HepG2 (cell line): ENCODE measurements at regions of chr4 and their contacts with region 1.

Region 1: GRCh38 chr4:140861359-140862176 is 105.4 kb upstream of the TBC1D9 start:
- DNase-seq: peak; percentile 60
- ATAC-seq: peak; percentile 73
- H3K4me3 ChIP-seq: no peak overlapping the region
- H3K27ac ChIP-seq: no peak overlapping the region
- H3K4me1 ChIP-seq: no peaks in the 10 kb centered on the region
- H3K27me3 ChIP-seq: 0 out of 5 replicates have a peak, but pooled peaks cover 0 to 20% of the 10 kb centered on the region in 2 experiments
- CTCF ChIP-seq: peak; percentile 83
- EP300 ChIP-seq: no peak
- POLR2A ChIP-seq: no peak
- RAD21 ChIP-seq: peak; percentile 32; the same call in 1 of the 2 replicates

Region 2: GRCh38 chr4:140884431-140885058 is 23.0 kb after region 1 on chr4:
- CTCF ChIA-PET with region 1: interaction called, 35 read pairs
- POLR2A ChIA-PET with region 1: no interaction called
- in situ Hi-C with region 1: no loop called
- intact Hi-C with region 1: loop called (anchors 1 kb)
- DNase-seq: peak; percentile 63
- ATAC-seq: peak; percentile 95
- H3K4me3 ChIP-seq: no peak overlapping the region
- H3K27ac ChIP-seq: no peak overlapping the region
- H3K4me1 ChIP-seq: peaks cover 7% of the 10 kb centered on the region
- H3K27me3 ChIP-seq: no peaks in the 10 kb centered on the region
- CTCF ChIP-seq: peak; percentile 82
- EP300 ChIP-seq: no peak
- POLR2A ChIP-seq: no peak
- RAD21 ChIP-seq: peak; percentile 55; the same call in 1 of the 2 replicates

Region 3: GRCh38 chr4:141133146-141133998 is 271.8 kb after region 1 on chr4 and contains the start of gene RNF150:
- CTCF ChIA-PET with region 1: interaction called, 10 read pairs
- POLR2A ChIA-PET with region 1: no interaction called
- in situ Hi-C with region 1: loop called (anchors 5 kb)
- intact Hi-C with region 1: loop called (anchors 1 kb)
- DNase-seq: peak; percentile 65
- ATAC-seq: peak; percentile 96
- H3K4me3 ChIP-seq: peak within 1 kb of the TSS; percentile 59 to 76 (median 69)
- H3K27ac ChIP-seq: no peak within 1 kb of the TSS
- H3K4me1 ChIP-seq: 0 out of 2 replicates have a peak, but pooled peaks cover 5% of the 10 kb centered on the region
- H3K27me3 ChIP-seq: peaks cover 1 to 31% of the 10 kb centered on the region in 2 experiments; a peak in 4 of 5 replicates
- CTCF ChIP-seq: peak; percentile 76
- EP300 ChIP-seq: no peak
- POLR2A ChIP-seq: no peak
- RAD21 ChIP-seq: no peak
- total RNA-seq, gene RNF150: 0.02 TPM in 1 of 2 replicates, not detected in the other